ENCODE measurements at regions of chr17 and their contacts with region 1.

Region 1: DNA sequence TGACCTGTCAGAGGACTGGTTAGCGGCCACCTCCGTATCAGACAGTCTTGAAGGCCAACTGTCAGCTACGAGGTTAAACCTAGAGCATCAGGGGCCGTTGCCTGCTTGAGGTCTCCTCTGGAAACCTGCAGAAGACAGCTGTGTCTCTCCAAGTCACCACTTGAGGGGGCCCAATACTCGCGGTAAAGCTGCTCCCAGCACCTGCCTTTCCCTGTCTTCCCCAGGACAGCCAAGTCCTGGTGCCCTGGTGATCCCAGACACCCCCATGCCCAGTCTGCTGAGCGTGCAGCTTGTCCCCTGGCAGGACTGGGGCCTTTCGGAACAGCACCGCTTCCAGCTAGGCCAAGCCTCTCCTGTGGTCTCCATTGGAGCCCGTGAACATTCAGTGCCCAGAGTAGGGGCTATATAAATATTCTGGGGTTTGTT is 80.1 kb downstream of the DNAH17 start:
- DNase-seq: peak; percentile 81 to 82
- H3K4me3 ChIP-seq: no peak overlapping the region
- H3K27ac ChIP-seq: no peak overlapping the region
- H3K4me1 ChIP-seq: no peaks in the 10 kb centered on the region
- H3K27me3 ChIP-seq: no peaks in the 10 kb centered on the region
- CTCF ChIP-seq: peak; percentile 23 to 92 (median 80)
- POLR2A ChIP-seq: no peak

Region 2: DNA sequence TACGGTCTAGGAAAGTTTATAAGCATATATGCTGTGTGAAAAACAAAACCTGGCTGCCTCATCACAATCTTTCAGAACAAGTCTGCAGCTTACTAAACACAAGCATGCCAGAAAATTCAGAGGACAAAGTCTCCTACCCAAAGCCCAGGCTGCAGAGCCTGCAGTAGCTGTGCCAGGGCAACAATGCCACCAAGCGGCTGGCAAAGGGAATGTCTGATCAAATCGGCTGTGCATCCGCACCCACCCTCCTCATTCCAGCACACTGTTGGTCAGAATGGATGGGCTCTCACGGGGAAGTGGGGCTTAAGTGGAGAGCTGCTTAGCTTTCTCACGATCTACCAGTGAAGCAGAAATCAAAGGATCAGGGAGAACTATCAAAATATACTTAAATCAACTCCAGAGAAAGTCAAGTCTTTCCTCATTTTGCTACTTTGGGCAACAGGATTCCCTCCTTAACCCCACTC is 211.4 kb after region 1 on chr17:
- intact Hi-C with region 1: loop called (anchors 5 kb)
- DNase-seq: peak; percentile 88 to 90
- H3K4me3 ChIP-seq: no peak overlapping the region
- H3K27ac ChIP-seq: peak overlapping the region; percentile 27 to 76 (median 73)
- H3K4me1 ChIP-seq: peaks cover 43 to 72% of the 10 kb centered on the region in 2 donors
- H3K27me3 ChIP-seq: no peaks in the 10 kb centered on the region
- CTCF ChIP-seq: peak; percentile 62 to 98 (median 89)
- POLR2A ChIP-seq: no peak

Region 3: DNA sequence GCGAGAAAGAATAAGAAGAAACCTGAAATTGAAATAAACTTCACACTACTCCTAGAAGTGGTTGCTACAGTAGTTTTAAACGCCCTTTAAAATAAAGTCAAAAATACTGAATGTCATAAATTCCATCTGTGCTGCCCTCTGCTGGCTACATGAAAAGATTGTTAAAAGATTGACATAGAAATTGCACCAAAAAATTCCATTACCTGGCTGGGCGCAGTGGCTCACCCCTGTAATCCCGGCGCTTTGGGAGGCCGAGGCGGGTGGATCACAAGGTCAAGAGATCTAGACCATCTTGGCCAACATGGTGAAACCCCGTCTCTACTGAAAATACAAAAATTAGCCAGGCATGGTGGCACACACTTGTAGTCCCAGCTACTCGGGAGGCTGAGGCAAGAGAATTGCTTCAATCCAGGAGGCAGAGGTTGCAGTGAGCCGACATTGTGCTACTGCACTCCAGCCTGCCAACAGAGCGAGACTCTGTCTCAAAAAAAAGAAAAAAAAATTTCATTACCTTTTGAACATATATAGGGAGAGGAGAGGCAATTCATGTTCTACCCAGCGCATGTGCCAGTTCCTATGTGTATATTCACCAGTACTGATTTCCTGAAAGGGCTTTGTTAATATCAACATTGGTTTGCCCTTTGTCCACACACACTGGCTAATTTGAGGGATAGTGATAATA is 248.4 kb after region 1 on chr17:
- intact Hi-C with region 1: loop called (anchors 10 kb)
- DNase-seq: peak in 1 of 2 donors; percentile 57
- H3K4me3 ChIP-seq: no peak overlapping the region
- H3K27ac ChIP-seq: peak overlapping the region; percentile 1 to 72 (median 42)
- H3K4me1 ChIP-seq: peaks cover 41 to 51% of the 10 kb centered on the region in 2 donors
- H3K27me3 ChIP-seq: no peaks in the 10 kb centered on the region
- CTCF ChIP-seq: peak; percentile 23 to 68 (median 50)
- POLR2A ChIP-seq: no peak

Region 4: DNA sequence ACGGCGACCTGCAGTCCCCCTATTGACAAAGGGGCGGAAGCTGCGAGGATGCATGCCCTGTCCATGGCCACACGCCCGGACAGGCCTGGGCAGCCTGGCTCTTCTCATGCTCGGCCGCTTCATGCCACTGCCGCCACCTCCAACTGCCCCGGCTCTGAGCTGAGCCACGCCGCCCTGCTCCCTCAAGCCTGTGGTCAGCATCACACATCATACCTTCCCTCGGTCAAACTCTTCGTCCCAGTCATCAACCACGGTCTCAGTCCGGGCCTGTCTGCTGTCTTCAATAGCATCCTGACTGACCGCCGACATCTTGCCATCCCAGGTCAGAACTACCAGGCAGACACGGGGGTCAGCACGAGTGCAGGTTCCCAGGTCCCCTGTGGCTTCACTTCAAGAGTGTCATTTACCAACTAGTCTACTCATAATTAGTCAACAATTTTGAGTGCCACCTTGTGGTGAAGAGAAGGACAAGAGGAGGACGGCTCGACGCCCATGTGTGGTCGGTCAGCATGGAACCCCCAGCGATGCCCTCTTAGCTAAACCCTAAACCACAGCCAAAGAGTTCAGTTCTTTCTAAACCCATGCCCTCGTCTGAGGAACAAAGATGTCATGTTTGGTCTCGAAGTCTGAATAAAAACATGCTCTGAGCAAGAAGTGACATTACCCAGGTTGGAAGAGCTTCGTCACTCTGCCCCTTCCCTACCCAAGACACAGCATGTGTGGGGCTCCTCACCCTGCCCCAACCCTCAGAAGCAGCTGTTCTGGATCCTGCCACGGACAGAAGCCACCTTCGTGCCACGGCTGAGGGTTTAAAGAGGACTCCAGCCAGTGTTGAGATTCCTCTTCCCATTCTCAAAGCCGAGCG is 301.8 kb after region 1 on chr17:
- intact Hi-C with region 1: loop called (anchors 5 kb)
- DNase-seq: no peak
- H3K4me3 ChIP-seq: no peak overlapping the region
- H3K27ac ChIP-seq: no peak overlapping the region
- H3K4me1 ChIP-seq: no peaks in the 10 kb centered on the region
- H3K27me3 ChIP-seq: no peaks in the 10 kb centered on the region
- CTCF ChIP-seq: peak in 4 of 6 experiments; percentile 3 to 39 (median 36)
- POLR2A ChIP-seq: no peak